CD4-positive, alpha-beta memory T cell (primary cell): ENCODE measurements at regions of chr6 and their contacts with region 1.

Region 1: DNA sequence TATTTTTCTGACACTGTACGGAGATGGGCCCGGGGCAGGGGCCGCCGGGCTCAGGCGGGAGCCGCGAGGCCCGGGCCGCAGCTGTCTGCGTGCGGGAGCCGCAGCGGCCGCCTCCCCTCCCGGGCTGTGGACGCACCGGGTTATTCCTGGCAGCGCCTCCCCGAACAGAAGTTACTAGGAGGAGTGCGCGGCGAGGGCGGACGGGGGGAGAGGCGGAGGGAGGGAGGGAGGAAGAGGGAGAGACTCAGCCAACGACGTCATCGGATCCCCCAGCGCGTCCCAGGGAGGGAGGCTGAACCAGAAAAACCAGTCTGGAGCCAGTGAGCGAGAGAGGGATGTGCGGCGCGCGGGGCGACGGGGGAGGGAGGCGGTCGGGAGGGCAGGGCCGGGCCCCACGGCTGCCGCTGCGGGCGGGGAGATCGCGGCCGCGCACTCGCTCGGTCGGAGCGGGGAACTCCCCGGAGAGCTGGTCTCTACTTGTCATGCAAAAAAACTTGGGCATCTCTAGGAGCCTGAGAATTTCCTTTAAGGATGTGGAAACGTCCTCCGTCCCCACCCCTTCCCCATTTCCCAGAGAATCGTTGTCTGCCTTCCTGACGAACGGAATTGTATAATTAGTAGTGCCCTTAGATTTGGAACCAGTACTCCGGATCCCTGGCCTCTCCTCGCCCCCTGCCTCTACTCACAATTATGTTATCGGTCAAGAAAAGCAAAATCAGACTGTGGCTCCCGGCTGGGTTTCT is 1.4 kb upstream of the HIVEP2 start:
- DNase-seq: peak; percentile 92 to 99 (median 95)
- H3K4me3 ChIP-seq: peak overlapping the region; percentile 51 to 92
- H3K4me3 Mint-ChIP-seq: peak overlapping the region; percentile 92 to 100 (median 94)
- H3K27ac ChIP-seq: peak overlapping the region; percentile 99
- H3K27ac Mint-ChIP-seq: peak overlapping the region; percentile 99 to 100 (median 99)
- H3K4me1 ChIP-seq: peaks cover 33% of the 10 kb centered on the region
- H3K4me1 Mint-ChIP-seq: peaks cover 23 to 57% (median 32%) of the 10 kb centered on the region in 4 donors
- H3K27me3 ChIP-seq: no peaks in the 10 kb centered on the region
- H3K27me3 Mint-ChIP-seq: peaks cover 0 to 7% of the 10 kb centered on the region in 2 donors

Region 2: DNA sequence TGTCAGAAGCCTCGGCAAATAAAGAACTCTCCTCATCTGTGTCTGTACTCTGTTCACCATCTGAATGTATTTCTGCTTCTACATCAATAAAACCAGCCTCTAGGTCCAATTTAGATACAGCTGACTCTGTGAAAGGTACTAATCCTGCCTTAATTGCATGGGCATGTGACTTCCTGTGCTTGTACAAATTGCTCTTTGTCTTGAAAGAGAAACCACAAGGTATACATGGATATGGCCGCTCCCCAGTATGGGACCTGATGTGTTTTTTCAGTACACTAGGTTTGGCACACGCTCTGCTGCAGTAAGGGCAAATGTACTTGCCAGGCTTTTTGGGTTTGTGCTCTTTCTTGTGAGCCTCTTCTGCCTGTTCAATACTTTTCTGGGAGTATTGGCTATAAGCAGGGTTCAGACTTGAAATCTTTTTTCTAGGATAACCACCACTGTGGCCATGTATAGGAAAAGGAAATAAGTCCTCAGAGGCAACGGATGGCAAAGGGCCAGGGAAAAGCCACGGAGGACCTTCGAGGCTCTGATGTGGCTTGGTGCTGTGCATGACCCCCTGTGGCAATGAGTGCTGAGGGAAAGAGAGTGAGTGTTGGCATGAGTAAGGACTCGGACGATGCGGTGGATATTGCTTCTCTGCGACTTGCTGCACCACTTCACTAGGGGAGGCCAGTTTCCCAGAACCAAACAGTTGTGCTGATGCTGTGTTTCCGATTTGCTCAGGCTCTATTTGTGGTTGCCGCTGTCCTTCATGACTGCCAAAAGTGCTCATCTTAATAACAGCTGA is 172.3 kb before region 1 on chr6:
- CTCF ChIA-PET with region 1: no interaction called
- POLR2A ChIA-PET with region 1: interaction called, 3 read pairs
- intact Hi-C with region 1: loop called (anchors 5 kb)
- DNase-seq: peak; percentile 45 to 57 (median 50)
- H3K4me3 ChIP-seq: peak overlapping the region in 1 of 2 donors; percentile 32
- H3K4me3 Mint-ChIP-seq: peak overlapping the region; percentile 57 to 88 (median 74)
- H3K27ac ChIP-seq: peak overlapping the region; percentile 53
- H3K27ac Mint-ChIP-seq: peak overlapping the region; percentile 74 to 93 (median 87)
- H3K4me1 ChIP-seq: peaks cover 38% of the 10 kb centered on the region
- H3K4me1 Mint-ChIP-seq: peaks cover 38 to 72% (median 54%) of the 10 kb centered on the region in 4 donors
- H3K27me3 ChIP-seq: no peaks in the 10 kb centered on the region
- H3K27me3 Mint-ChIP-seq: no peaks in the 10 kb centered on the region

Region 3: GRCh38 chr6:142845624-142846458 is 100.5 kb before region 1 on chr6:
- CTCF ChIA-PET with region 1: interaction called, 6 read pairs
- POLR2A ChIA-PET with region 1: interaction called, 45 read pairs
- intact Hi-C with region 1: loop called (anchors 1 kb)
- DNase-seq: peak; percentile 59 to 77 (median 62)
- H3K4me3 ChIP-seq: peak overlapping the region; percentile 31 to 55
- H3K4me3 Mint-ChIP-seq: peak overlapping the region; percentile 78 to 95 (median 87)
- H3K27ac ChIP-seq: peak overlapping the region; percentile 83
- H3K27ac Mint-ChIP-seq: peak overlapping the region; percentile 89 to 99 (median 96)
- H3K4me1 ChIP-seq: peaks cover 96% of the 10 kb centered on the region
- H3K4me1 Mint-ChIP-seq: peaks cover 65 to 99% (median 85%) of the 10 kb centered on the region in 4 donors
- H3K27me3 ChIP-seq: no peaks in the 10 kb centered on the region
- H3K27me3 Mint-ChIP-seq: no peaks in the 10 kb centered on the region

Region 4: DNA sequence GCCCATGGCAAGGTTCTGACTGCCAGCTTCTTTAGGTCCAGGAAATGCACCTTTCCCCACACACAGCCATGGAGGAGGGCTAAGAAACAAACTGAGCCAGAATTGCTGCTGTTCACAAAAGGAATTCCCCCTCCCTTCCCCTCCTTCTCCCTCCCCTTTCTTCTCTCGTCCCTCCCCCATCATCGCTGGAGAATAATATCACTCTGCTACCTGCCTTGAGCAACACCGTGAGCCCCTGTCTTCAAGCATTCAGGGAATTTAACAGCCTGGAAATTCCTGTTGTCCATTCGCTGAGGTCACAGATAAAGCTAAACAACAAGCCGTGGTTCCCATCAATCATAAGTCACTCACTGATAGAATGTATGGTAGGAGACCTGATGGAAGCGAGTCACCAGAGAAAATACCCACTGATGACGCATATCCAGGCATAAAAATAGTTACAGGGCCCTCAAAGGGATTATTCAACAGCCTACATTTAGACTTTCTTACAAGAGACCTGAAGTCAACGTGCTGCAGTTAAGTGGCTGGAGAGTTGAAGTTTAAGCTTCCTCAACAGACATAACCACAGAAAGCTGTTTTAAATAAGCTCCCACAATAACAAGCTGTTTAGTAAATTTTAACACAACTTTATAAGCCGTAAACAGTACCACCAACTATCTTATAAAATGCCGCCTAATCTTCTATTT is 61.0 kb before region 1 on chr6:
- CTCF ChIA-PET with region 1: interaction called, 7 read pairs
- POLR2A ChIA-PET with region 1: interaction called, 45 read pairs
- intact Hi-C with region 1: loop called (anchors 1 kb)
- DNase-seq: peak; percentile 75 to 90 (median 80)
- H3K4me3 ChIP-seq: peak overlapping the region; percentile 54 to 64
- H3K4me3 Mint-ChIP-seq: peak overlapping the region; percentile 90 to 99 (median 94)
- H3K27ac ChIP-seq: peak overlapping the region; percentile 80
- H3K27ac Mint-ChIP-seq: peak overlapping the region; percentile 92 to 100 (median 100)
- H3K4me1 ChIP-seq: peaks cover 100% of the 10 kb centered on the region
- H3K4me1 Mint-ChIP-seq: peaks cover 70 to 98% (median 87%) of the 10 kb centered on the region in 4 donors
- H3K27me3 ChIP-seq: no peaks in the 10 kb centered on the region
- H3K27me3 Mint-ChIP-seq: no peaks in the 10 kb centered on the region

Region 5: DNA sequence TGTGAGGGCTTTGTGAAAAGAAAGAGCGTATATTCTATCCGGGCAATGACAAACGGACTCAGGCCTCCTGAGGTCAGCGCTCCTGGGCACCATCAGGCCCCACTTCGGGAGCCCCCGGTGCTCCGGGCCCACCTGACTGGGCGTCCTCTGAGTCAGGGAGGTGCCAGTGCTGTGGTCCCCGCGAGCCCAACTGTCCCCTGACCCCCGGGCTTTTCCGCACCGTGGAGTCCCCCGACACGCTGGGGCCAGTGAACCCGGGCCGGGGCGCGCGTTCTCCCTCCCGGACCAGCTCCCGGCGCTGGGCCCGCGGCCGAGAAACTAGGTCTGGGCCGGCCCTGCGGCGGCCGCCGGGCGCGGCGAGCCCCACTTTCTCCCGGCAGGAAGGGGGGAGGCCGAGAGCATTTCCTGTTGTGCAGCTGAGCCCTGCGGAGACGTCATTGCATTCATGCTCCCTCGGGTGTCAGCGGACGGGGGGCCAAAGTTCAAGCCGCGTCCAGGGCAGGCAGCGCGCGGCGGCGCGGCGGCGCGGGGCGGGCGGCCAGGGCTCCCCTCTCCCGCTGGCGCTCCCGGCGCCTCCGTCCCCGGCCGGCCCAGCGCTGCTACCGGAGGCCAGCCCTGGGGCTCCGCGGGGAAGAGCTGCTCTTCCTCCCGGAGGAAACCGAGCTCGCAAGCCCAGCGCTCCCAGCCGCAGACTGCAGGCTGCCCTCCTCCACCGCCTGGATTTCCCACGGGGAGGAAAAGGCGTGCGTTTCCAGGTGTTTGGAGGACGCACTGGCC is 19.7 kb before region 1 on chr6:
- CTCF ChIA-PET with region 1: interaction called, 19 read pairs
- POLR2A ChIA-PET with region 1: interaction called, 452 read pairs
- intact Hi-C with region 1: loop called (anchors 1 kb)
- DNase-seq: peak; percentile 82 to 87 (median 86)
- H3K4me3 ChIP-seq: peak overlapping the region; percentile 82 to 86
- H3K4me3 Mint-ChIP-seq: peak overlapping the region; percentile 88 to 99 (median 94)
- H3K27ac ChIP-seq: peak overlapping the region; percentile 98
- H3K27ac Mint-ChIP-seq: peak overlapping the region; percentile 90 to 100 (median 98)
- H3K4me1 ChIP-seq: peaks cover 60% of the 10 kb centered on the region
- H3K4me1 Mint-ChIP-seq: peaks cover 42 to 77% (median 56%) of the 10 kb centered on the region in 4 donors
- H3K27me3 ChIP-seq: no peaks in the 10 kb centered on the region
- H3K27me3 Mint-ChIP-seq: no peaks in the 10 kb centered on the region

Region 6: DNA sequence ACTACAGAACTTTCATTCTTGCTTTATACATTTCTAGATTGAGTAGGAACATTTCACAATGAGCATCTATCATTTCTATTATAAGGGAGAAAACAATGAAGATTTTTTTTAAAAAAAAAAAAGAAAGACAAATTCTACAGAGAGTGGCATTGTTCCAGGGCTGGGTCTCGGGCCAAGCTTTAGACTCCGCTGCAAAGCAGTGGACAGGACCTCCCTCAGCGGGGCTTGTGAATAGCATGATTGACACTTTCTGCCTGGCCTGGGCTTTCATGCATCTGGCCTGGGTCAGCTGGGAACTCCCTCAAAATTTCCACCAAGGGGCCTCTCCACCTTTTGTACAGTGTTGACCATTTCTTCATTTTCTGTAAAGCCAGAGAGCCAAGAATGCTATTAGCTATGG is 54.5 kb after region 1 on chr6:
- CTCF ChIA-PET with region 1: no interaction called
- POLR2A ChIA-PET with region 1: no interaction called
- intact Hi-C with region 1: no loop called
- DNase-seq: no peak
- H3K4me3 ChIP-seq: no peak overlapping the region
- H3K4me3 Mint-ChIP-seq: no peak overlapping the region
- H3K27ac ChIP-seq: no peak overlapping the region
- H3K27ac Mint-ChIP-seq: no peak overlapping the region
- H3K4me1 ChIP-seq: no peaks in the 10 kb centered on the region
- H3K4me1 Mint-ChIP-seq: no peaks in the 10 kb centered on the region
- H3K27me3 ChIP-seq: no peaks in the 10 kb centered on the region
- H3K27me3 Mint-ChIP-seq: no peaks in the 10 kb centered on the region

Region 7: GRCh38 chr6:143015300-143015706 is 69.0 kb after region 1 on chr6:
- CTCF ChIA-PET with region 1: no interaction called
- POLR2A ChIA-PET with region 1: no interaction called
- intact Hi-C with region 1: no loop called
- DNase-seq: no peak
- H3K4me3 ChIP-seq: no peak overlapping the region
- H3K4me3 Mint-ChIP-seq: no peak overlapping the region
- H3K27ac ChIP-seq: no peak overlapping the region
- H3K27ac Mint-ChIP-seq: peak overlapping the region in 1 of 7 donors; percentile 62
- H3K4me1 ChIP-seq: no peaks in the 10 kb centered on the region
- H3K4me1 Mint-ChIP-seq: no peaks in the 10 kb centered on the region
- H3K27me3 ChIP-seq: no peaks in the 10 kb centered on the region
- H3K27me3 Mint-ChIP-seq: peaks cover 1 to 4% of the 10 kb centered on the region in 2 donors

Region 8: DNA sequence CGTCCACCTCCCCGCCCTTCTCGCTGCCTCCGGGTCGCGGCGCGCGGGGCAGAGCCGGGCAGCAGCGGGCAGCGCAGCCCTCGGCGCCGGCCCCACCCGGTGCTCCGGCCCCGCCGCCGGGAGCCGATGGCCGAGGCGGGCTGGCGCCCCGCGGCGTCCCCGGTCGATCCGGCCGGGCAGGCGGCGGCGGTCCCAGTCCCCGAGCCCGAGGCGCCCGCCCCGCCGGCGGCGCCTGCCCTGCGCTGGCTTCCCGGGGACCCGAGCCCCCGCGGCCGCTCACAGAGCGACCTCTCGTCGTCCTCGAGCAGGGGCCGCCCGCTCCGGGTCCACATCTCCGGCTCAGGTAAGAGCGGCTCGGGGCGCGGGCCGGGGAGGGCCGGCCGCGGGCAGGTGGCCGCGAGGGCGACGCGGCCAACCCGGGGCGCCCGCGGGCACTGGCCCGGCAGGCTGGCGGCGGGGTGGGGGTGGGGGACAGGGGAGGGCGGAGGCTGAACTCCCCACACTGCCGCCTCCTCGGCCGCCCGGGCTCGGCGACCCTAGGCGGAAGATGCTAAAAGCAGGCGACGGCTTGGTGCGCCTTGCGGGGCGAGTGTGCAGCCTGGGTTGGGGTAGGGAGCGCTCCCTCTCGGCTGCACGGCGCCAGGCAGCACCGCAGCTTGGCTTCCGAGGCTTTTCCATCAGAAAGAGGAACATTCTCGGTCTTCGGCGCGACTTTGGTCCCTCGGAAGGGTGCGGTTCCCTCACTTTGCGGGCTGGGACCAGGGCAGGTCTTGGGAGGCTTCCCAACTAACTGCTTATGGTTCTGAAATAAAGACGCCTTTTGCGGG is 590.7 kb after region 1 on chr6:
- CTCF ChIA-PET with region 1: no interaction called
- POLR2A ChIA-PET with region 1: interaction called, 3 read pairs
- intact Hi-C with region 1: loop called (anchors 10 kb)
- DNase-seq: peak; percentile 53 to 64 (median 61)
- H3K4me3 ChIP-seq: peak overlapping the region; percentile 36 to 71
- H3K4me3 Mint-ChIP-seq: peak overlapping the region; percentile 88 to 95 (median 92)
- H3K27ac ChIP-seq: peak overlapping the region; percentile 73
- H3K27ac Mint-ChIP-seq: peak overlapping the region; percentile 91 to 96 (median 96)
- H3K4me1 ChIP-seq: peaks cover 54% of the 10 kb centered on the region
- H3K4me1 Mint-ChIP-seq: peaks cover 35 to 55% (median 47%) of the 10 kb centered on the region in 4 donors
- H3K27me3 ChIP-seq: no peaks in the 10 kb centered on the region
- H3K27me3 Mint-ChIP-seq: no peaks in the 10 kb centered on the region

Region 9: GRCh38 chr6:143973097-143973966 is 1027.0 kb after region 1 on chr6:
- CTCF ChIA-PET with region 1: no interaction called
- POLR2A ChIA-PET with region 1: no interaction called
- intact Hi-C with region 1: no loop called
- DNase-seq: no peak
- H3K4me3 ChIP-seq: no peak overlapping the region
- H3K4me3 Mint-ChIP-seq: no peak overlapping the region
- H3K27ac ChIP-seq: no peak overlapping the region
- H3K27ac Mint-ChIP-seq: peak overlapping the region in 1 of 7 donors; percentile 3
- H3K4me1 ChIP-seq: no peaks in the 10 kb centered on the region
- H3K4me1 Mint-ChIP-seq: peaks cover 0 to 6% (median 4%) of the 10 kb centered on the region in 4 donors
- H3K27me3 ChIP-seq: no peaks in the 10 kb centered on the region
- H3K27me3 Mint-ChIP-seq: peaks cover 0 to 3% of the 10 kb centered on the region in 2 donors